AG04449 (cell line): ENCODE measurements at regions of chr6 and their contacts with region 1.

Region 1: GRCh38 chr6:16964553-16965501 is 137.0 kb upstream of the STMND1 start:
- DNase-seq: no peak
- H3K4me3 ChIP-seq: no peak overlapping the region
- CTCF ChIP-seq: peak; percentile 93

Region 2: GRCh38 chr6:16947375-16948015 is 17.3 kb before region 1 on chr6:
- CTCF ChIA-PET with region 1: interaction called, 147 read pairs
- POLR2A ChIA-PET with region 1: no interaction called
- DNase-seq: peak; percentile 99
- H3K4me3 ChIP-seq: peak overlapping the region; percentile 13; the same call in 1 of the 2 replicates
- CTCF ChIP-seq: no peak

Region 3: DNA sequence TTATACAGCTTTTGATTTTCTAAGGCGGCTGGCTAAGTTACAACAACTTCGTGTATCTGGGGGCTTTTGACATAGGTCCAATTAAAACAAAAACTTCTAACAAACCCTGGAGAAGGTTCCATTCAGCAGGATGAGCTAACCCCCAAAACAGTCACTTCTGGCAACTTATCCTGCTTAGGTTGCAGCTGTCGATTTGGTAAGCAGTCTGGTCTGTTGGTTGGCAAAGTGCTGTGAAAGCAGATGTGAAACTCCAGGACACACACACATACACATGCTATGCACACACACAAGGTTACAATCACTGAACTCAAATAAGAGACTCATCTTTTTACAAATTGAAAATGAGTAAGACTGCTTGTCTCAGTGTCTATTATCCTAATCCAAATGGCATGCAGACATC is 18.0 kb after region 1 on chr6:
- CTCF ChIA-PET with region 1: interaction called, 91 read pairs
- POLR2A ChIA-PET with region 1: no interaction called
- DNase-seq: peak; percentile 79
- H3K4me3 ChIP-seq: no peak overlapping the region
- CTCF ChIP-seq: no peak

Region 4: GRCh38 chr6:17086469-17086868 is 121.6 kb after region 1 on chr6:
- CTCF ChIA-PET with region 1: interaction called, 10 read pairs
- POLR2A ChIA-PET with region 1: no interaction called
- DNase-seq: peak; percentile 24
- H3K4me3 ChIP-seq: no peak overlapping the region
- CTCF ChIP-seq: peak; percentile 57